Ovary (tissue), 10 donors: ENCODE measurements at regions of chr12 and their contacts with region 1.

Region 1: DNA sequence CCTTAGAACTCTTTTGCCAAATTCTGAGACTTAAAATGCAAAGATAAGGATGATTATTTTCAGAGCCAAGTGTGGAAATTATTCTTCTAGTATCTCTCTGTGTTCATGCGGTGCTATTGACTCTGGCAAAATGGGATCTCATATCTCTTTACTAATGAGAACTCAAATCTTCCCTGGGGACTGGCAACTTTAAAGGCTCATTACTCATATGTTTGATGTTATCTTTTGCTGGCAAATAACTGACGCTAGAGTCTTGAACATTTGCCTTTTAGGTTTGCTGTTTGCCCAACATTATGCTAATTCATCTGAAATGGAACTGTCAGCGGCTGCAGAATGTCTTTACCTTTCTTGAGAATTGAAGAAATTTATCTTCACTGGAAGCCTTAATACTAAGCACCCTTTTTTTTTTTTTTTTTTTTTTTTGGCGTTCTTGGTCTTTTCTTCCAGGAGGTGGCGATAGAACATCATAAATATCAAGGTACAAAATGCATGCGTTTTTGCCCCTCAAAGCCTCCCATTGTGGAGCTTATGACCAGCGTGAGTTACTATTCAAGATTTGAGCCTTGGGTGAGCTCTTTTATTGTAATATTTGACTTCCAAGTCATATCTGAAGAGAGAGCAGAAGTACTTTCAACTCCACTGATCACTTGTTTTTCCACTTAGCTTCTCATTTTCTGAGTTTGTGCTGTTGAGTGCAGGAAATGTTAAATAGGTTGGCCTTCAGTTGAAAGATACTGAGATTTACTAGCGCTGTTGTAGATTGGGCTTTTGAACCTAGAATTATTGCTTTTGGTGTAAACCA is 86.6 kb downstream of the CAND1 start:
- DNase-seq: peak in 2 of 5 donors; percentile 12 to 18
- H3K4me3 ChIP-seq: no peak overlapping the region
- H3K27ac ChIP-seq: no peak overlapping the region
- H3K4me1 ChIP-seq: peaks cover 3% of the 10 kb centered on the region
- H3K27me3 ChIP-seq: no peaks in the 10 kb centered on the region
- CTCF ChIP-seq: peak in 1 of 3 donors; percentile 18
- EP300 ChIP-seq: no peak
- POLR2A ChIP-seq: no peak

Region 2: DNA sequence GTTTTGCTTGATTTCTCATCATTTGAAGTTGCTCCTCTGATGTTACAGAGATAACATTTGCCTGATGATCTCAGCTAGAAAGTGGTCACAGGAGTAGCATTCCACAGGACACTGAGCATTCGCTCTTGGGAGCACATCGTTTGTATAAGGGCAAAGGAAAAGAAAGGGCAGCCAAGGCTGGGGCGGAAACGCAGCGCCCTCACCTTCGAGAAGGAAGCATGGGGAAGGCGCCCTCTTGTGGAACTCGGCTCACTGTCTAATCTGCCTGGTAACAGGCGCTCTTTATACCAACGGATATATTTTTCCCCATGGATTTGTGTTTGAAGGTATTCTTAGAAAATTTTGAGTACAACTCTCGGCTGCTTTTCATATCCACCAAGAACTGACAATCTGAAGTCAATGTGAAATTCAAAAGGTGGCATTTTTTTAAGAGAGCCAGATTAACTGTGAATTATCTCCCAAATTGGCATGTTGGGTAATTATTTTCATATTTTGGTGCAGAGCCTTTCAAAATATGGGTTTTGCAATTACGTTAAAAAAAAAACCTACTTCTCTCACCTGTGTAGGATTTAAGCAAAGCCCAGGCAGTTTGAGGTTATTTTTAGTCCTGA is 86.1 kb after region 1 on chr12:
- intact Hi-C with region 1: loop called in 3 of 4 experiments (anchors 10 kb)
- DNase-seq: peak; percentile 84 to 91 (median 86)
- H3K4me3 ChIP-seq: no peak overlapping the region
- H3K27ac ChIP-seq: no peak overlapping the region
- H3K4me1 ChIP-seq: peaks cover 2% of the 10 kb centered on the region
- H3K27me3 ChIP-seq: no peaks in the 10 kb centered on the region
- CTCF ChIP-seq: peak; percentile 57 to 68 (median 60)
- EP300 ChIP-seq: no peak
- POLR2A ChIP-seq: no peak

Region 3: GRCh38 chr12:67943226-67943892 is 587.6 kb after region 1 on chr12:
- intact Hi-C with region 1: loop called in 2 of 4 experiments (anchors 10 kb)
- DNase-seq: peak in 4 of 5 donors; percentile 24 to 65 (median 38)
- H3K4me3 ChIP-seq: no peak overlapping the region
- H3K27ac ChIP-seq: no peak overlapping the region
- H3K4me1 ChIP-seq: no peaks in the 10 kb centered on the region
- H3K27me3 ChIP-seq: no peaks in the 10 kb centered on the region
- CTCF ChIP-seq: peak in 2 of 3 donors; percentile 54 to 55
- EP300 ChIP-seq: no peak
- POLR2A ChIP-seq: no peak